Adrenal gland (tissue), 19 donors: ENCODE measurements at regions of chr4 and their contacts with region 1.

Region 1: DNA sequence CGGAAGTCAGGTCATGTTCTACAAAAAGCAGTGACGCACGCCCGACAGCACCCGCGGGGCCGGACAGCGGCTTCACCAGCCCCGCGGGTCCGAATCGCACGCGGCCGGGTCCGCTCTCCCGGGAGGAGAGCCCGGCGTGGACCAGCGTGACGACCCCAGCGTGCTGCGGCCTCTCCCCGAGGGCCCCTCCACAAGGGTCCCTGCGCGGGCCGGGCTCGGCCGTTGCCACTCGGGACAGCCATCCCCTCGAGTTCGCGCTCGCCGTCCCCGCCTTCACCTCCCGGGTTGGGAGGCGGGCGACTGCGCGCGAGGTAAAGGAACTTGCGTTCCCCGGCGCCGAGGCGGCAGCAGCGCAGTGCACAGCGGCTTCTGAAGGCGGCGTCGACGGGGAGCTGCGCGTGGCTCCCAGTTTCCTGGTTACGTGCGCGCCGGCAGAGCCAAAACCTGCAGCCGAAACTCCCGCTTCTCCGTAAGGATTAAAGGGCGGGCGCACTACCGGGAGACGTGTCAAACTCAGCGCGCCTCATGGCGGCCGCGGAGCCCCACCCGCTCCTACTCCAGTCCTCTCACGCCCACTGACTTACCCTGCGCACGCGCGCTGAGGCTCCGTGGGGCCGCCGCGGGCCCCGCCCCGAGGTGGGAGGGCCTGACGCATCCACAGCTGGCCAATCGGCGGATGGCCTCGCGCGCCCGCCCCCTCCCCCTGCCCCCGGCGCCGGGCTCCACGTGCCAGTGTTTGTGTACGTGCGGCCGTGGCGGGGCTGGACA is 416 bp upstream of the LRP2BP start:
- DNase-seq: peak; percentile 96 to 99 (median 97)
- H3K4me3 ChIP-seq: peak overlapping the region; percentile 27 to 81 (median 31)
- H3K27ac ChIP-seq: peak overlapping the region; percentile 83 to 100 (median 97)
- H3K4me1 ChIP-seq: peaks cover 0 to 12% of the 10 kb centered on the region in 2 donors
- H3K27me3 ChIP-seq: no peaks in the 10 kb centered on the region
- CTCF ChIP-seq: peak in 1 of 6 experiments; percentile 15
- POLR2A ChIP-seq: peak; percentile 61 to 75

Region 2: DNA sequence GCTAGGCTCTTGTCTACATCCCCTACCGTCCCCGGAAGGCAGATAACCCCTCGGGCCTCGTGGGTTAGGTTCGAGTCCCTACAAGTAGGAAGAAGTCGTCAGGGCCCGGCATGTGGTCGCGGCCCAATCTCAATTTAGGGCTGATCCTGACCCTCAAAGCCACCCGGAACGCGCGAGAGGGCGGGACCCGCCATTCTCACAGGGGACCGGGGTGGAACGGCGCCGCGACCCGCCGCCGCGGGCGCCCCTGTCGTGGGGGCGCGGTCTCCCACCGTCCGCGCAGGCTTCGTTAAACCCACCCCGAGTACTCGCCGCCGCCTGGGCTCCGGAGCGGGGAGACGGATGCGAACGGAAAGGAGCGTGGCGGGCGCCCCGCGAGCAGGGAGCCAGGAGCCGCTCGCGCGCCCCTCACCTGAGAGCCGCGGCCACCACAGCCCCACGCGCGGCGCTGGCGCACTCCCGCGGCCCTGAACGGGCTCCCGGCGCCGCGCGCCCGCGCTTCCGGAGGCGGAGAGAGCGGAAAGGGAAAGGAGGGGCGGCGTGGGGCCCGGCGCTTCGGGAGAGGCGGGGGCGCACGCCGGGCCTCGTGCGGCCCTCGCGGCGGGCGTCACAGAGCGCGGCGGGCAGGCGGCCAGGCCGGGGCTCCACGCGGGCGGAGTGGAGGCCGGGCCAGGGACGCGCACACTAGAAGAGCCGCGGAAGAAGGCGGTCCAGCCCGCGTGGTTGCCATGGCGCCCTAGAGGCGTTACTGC is 192.5 kb before region 1 on chr4 and contains the start of gene CFAP97:
- intact Hi-C with region 1: loop called in 1 of 2 experiments (anchors 10 kb)
- DNase-seq: peak; percentile 93 to 96 (median 93)
- H3K4me3 ChIP-seq: peak within 1 kb of the TSS; percentile 42 to 89 (median 56)
- H3K27ac ChIP-seq: peak within 1 kb of the TSS; percentile 87 to 99 (median 95)
- H3K4me1 ChIP-seq: peaks cover 9 to 17% of the 10 kb centered on the region in 2 donors
- H3K27me3 ChIP-seq: no peaks in the 10 kb centered on the region
- CTCF ChIP-seq: no peak
- POLR2A ChIP-seq: peak; percentile 69 to 74
- total RNA-seq, gene CFAP97: 13.6 to 32.8 (median 26.7) TPM